ENCODE measurements at regions of chr21 and their contacts with region 1.

Region 1: DNA sequence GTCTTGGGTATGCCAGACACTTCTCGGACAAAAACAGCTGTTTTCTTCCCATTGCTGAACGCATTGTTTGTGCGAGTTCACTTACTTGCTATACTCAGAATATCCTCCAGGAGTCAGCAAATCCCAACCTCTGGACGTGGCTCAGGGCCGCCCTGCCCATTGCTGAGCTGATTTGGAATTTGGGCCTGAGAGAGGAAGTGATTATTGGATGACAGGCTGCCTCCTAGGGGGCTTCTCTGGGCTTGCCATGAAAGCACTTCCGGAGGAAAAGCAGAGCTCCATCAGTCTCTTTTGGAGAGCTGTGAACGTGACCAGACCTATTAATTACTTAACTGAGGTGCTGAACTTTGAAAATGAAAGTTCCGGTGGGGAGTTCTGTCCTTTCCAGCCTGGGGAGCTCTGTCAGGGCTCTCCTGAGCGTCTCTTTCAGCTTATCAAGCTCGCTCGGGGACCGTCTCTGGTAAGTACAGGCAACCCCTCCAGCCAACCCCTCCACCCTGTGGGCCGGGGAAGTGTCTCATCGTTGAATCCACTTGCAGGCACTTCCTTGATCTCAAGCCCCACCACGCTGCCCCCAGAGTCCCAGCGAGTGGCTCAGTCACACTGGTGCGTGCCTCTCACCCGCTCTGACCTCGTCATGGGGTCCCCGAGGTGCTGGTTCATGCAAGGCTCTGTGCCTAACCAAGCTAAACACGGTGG is 76.9 kb downstream of the CLIC6 start:
- DNase-seq: peak; percentile 46
- H3K4me3 Mint-ChIP-seq: peak overlapping the region; percentile 13
- H3K27ac Mint-ChIP-seq: peak overlapping the region; percentile 1
- H3K4me1 Mint-ChIP-seq: peaks cover 4% of the 10 kb centered on the region
- H3K27me3 Mint-ChIP-seq: peaks cover 9% of the 10 kb centered on the region

Region 2: DNA sequence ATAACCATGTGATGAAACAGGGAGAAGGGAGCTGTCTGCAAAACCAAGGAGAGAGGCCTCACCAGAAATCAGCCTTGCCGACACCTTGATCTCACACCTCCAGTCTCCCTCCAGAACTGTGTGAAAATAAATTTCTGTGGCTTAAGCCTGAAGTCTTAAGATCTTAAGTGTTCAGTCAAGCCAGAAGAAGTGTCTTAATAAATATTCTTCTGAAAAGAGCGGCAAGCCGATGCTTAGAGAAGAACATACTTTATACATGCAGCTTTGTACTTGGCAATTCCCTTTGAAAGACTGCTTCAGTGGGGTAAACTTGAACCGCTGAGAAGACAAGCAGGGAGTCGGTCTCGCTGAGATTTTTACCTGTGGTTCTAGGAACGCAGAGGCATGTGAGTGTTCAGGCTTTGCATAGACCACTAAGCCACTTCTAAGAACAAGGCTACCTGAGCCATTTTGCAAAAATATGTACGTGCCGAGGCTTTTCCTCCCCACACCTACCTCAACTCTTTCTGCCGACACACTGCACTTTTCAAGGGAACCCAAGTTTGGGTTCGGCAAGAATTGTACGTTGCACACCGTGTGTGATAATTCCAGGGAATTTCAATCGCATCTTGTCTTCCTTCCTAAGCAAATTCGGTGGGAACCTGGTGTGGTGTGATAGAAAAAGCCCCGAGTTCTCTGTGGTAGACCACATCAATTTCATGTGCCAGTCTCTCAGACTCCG is 300.0 kb after region 1 on chr21:
- intact Hi-C with region 1: loop called (anchors 2 kb)
- DNase-seq: peak; percentile 58
- H3K4me3 Mint-ChIP-seq: peak overlapping the region; percentile 93
- H3K27ac Mint-ChIP-seq: peak overlapping the region; percentile 98
- H3K4me1 Mint-ChIP-seq: peaks cover 95% of the 10 kb centered on the region
- H3K27me3 Mint-ChIP-seq: no peaks in the 10 kb centered on the region

Region 3: GRCh38 chr21:35400233-35400957 is 654.7 kb after region 1 on chr21:
- intact Hi-C with region 1: loop called (anchors 1 kb)
- DNase-seq: peak; percentile 9
- H3K4me3 Mint-ChIP-seq: no peak overlapping the region
- H3K27ac Mint-ChIP-seq: no peak overlapping the region
- H3K4me1 Mint-ChIP-seq: peaks cover 23% of the 10 kb centered on the region
- H3K27me3 Mint-ChIP-seq: no peaks in the 10 kb centered on the region

Region 4: DNA sequence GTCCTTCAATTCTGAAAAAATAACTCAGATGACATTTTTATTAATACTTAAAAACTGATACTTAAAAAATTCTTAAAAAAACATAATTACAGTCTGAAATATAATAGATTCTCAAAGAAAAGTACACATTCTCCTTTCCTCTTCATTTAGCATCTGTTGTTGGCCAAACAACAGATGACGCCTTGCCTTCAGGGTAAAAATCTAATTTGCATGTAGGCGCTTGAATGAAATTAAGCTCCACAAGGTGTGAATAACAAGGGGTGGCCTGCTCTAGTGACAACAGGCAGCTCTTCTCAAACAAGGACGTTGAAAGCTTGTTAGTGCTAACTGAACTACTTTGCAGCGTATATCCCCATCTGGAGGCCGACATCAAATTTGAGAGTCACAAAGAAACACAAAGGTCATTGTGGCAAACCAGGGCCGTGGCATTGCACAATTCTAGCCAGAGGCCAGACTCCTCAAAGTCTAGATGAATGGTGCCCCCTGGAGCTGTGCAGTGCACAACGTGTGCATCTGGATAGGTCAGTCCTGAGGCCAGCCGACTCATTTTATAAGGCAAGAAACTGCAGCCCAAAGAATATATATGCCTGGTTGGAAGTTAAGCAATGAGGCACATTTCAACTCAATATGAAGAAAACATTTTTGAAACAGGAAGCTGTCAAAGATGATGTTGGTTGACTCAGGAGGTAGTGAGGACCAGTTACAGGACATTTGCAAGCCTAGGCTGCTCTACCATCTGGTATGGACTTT is 762.6 kb after region 1 on chr21:
- intact Hi-C with region 1: loop called (anchors 10 kb)
- DNase-seq: no peak
- H3K4me3 Mint-ChIP-seq: no peak overlapping the region
- H3K27ac Mint-ChIP-seq: no peak overlapping the region
- H3K4me1 Mint-ChIP-seq: peaks cover 68% of the 10 kb centered on the region
- H3K27me3 Mint-ChIP-seq: no peaks in the 10 kb centered on the region

Region 5: GRCh38 chr21:35840197-35840799 is 1094.6 kb after region 1 on chr21:
- intact Hi-C with region 1: loop called (anchors 1 kb)
- DNase-seq: peak; percentile 28
- H3K4me3 Mint-ChIP-seq: no peak overlapping the region
- H3K27ac Mint-ChIP-seq: no peak overlapping the region
- H3K4me1 Mint-ChIP-seq: no peaks in the 10 kb centered on the region
- H3K27me3 Mint-ChIP-seq: peaks cover 7% of the 10 kb centered on the region

Region 6: DNA sequence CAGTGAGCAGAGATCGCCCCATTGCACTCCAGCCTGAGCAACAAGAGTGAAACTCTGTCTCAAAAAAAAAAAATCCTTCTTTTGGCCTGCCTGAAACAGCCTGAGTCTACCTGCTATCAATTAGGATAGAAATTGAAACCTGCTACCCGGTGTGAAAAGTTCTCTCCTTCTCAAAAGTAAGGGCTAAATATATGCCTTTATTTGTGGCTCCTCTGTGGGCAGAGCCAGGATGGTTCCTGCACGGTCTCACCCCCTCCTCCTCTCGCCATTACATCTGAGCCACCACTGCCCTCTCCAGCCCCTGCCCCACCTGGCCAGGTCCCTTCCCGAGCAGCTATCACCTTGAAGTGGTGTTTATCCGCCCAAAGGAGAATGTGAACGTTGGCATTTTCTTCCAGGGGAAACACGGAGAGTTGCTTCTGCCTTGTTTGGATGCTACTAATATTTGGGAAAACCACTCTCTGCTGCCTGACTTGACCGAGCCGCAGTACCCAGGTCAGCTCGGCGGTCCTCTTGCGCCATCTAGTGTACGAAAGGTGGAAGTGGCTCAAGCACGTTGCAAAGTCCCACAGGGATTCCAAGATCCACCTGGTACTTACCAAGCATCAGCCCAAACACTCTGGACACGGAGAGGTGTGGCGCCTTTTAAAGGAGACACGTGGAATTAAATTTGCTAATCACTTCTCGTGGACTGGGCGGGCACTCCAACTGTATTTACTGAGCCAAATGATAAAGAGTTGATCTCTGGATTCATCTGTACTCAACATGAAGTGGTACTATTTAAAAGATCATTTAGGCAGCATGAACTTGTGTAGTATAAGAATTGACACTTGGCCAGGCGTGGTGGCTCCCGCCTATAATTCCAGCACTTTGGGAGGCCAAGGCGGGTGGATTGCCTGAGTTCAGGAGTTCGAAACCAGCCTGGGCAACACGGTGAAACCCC is 1282.7 kb after region 1 on chr21:
- intact Hi-C with region 1: loop called (anchors 1 kb)
- DNase-seq: peak; percentile 57
- H3K4me3 Mint-ChIP-seq: no peak overlapping the region
- H3K27ac Mint-ChIP-seq: no peak overlapping the region
- H3K4me1 Mint-ChIP-seq: peaks cover 6% of the 10 kb centered on the region
- H3K27me3 Mint-ChIP-seq: peaks cover 2% of the 10 kb centered on the region